ENCODE measurements at regions of chr7 and their contacts with region 1.

Region 1: DNA sequence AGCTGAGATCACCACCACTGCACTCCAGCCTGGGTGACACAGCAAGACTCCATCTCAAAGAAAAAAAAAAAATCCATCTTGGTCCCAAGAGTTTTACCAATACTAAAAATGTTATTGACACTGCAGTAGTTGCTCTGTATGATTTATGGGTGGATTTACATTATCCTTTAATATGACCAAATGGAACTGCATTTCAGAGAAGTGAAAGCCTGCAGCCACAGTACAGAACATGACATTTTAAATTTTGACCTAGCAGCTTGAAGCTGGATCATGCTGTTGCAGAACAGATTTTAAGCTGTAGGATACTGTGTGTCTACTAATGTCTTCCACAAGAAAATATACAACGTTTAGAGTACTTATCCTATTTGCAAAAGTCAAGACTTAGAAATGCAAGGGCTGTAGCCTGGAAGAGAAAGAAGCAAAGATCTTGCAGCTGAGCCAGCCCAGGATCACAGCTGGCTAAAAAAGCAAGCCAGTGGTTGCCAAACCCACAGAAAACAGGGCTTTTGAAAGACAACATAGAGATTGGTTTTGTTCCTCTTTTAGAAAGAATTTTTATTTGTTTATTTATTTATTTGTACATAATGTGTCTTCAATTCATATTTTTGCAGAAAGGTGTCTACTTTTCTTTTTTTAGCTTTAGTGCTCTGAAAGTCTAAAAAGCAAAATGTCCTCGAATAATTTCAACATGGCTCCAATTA is 55.2 kb upstream of the WNT16 start:
- DNase-seq: no peak
- H3K4me3 ChIP-seq: no peak overlapping the region
- H3K27ac ChIP-seq: no peak overlapping the region
- H3K4me1 ChIP-seq: peaks cover 0 to 4% of the 10 kb centered on the region in 2 experiments; a peak in 2 of 4 replicates
- H3K27me3 ChIP-seq: no peaks in the 10 kb centered on the region
- CTCF ChIP-seq: no peak
- EP300 ChIP-seq: no peak
- RAD21 ChIP-seq: no peak

Region 2: GRCh38 chr7:121259826-121260225 is 13.8 kb before region 1 on chr7:
- CTCF ChIA-PET with region 1: interaction called, 11 read pairs
- POLR2A ChIA-PET with region 1: interaction called, 3 read pairs
- DNase-seq: no peak
- H3K4me3 ChIP-seq: no peak overlapping the region
- H3K27ac ChIP-seq: no peak overlapping the region
- H3K4me1 ChIP-seq: no peaks in the 10 kb centered on the region
- H3K27me3 ChIP-seq: no peaks in the 10 kb centered on the region
- CTCF ChIP-seq: no peak
- EP300 ChIP-seq: no peak
- RAD21 ChIP-seq: no peak

Measured in SK-N-SH (cell line).